ENCODE measurements at regions of chr1 and their contacts with region 1.

Region 1: DNA sequence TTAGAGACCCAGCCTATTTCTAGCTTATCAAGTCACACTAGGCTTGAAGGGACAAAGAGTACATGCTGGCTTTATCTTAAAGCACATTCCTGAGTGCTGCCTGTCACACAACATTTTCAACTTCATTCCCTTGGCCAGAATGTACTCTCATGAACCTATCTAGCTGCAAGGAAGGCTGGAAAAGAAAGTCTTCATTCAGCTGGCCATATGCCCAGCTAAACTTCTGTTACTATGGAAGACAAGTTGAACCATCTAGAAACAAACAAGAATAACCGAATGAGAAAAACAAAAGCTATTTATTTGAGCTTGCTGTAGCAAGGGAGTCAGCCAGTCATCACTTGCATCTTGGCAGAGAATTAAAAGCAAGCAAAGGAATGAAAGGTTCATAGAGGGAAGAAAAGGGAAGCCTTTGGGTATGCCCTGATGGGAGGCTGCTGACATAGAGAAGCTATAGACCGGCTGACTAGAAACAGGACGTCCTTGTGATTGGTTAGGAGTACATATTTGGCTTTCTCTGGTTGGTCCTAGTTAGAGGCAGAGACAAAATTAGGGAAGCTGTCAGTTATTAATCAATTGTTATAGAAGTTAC is 108.4 kb downstream of the NEK7 start:
- DNase-seq: no peak
- ATAC-seq: peak; percentile 97

Region 2: GRCh38 chr1:198167436-198167934 is 97.7 kb before region 1 on chr1:
- intact Hi-C with region 1: loop called (anchors 10 kb)
- DNase-seq: no peak
- ATAC-seq: peak; percentile 84

Measured in left ventricle myocardium superior (tissue), 1 donor.